ENCODE measurements at regions of chr7 and their contacts with region 1.

Region 1: DNA sequence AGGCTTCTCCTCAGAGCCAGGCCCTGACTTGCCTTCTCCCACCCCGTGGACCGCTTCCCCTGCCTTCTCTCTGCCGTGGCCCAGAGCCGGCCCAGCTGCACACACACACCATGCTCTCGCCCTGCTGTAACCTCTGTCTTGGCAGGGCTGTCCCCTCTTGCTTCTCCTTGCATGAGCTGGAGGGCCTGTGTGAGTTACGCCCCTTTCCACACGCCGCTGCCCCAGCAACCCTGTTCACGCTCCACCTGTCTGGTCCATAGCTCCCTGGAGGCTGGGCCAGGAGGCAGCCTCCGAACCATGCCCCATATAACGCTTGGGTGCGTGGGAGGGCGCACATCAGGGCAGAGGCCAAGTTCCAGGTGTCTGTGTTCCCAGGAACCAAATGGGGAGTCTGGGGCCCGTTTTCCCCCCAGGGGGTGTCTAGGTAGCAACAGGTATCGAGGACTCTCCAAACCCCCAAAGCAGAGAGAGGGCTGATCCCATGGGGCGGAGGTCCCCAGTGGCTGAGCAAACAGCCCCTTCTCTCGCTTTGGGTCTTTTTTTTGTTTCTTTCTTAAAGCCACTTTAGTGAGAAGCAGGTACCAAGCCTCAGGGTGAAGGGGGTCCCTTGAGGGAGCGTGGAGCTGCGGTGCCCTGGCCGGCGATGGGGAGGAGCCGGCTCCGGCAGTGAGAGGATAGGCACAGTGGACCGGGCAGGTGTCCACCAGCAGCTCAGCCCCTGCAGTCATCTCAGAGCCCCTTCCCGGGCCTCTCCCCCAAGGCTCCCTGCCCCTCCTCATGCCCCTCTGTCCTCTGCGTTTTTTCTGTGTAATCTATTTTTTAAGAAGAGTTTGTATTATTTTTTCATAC is 38.0 kb downstream of the LIMK1 start:
- DNase-seq: no peak
- ATAC-seq: no peak
- H3K4me3 ChIP-seq: no peak overlapping the region
- H3K27ac ChIP-seq: no peak overlapping the region
- H3K4me1 ChIP-seq: no peaks in the 10 kb centered on the region
- H3K27me3 ChIP-seq: no peaks in the 10 kb centered on the region
- CTCF ChIP-seq: no peak
- EP300 ChIP-seq: no peak
- POLR2A ChIP-seq: no peak
- RAD21 ChIP-seq: no peak

Region 2: DNA sequence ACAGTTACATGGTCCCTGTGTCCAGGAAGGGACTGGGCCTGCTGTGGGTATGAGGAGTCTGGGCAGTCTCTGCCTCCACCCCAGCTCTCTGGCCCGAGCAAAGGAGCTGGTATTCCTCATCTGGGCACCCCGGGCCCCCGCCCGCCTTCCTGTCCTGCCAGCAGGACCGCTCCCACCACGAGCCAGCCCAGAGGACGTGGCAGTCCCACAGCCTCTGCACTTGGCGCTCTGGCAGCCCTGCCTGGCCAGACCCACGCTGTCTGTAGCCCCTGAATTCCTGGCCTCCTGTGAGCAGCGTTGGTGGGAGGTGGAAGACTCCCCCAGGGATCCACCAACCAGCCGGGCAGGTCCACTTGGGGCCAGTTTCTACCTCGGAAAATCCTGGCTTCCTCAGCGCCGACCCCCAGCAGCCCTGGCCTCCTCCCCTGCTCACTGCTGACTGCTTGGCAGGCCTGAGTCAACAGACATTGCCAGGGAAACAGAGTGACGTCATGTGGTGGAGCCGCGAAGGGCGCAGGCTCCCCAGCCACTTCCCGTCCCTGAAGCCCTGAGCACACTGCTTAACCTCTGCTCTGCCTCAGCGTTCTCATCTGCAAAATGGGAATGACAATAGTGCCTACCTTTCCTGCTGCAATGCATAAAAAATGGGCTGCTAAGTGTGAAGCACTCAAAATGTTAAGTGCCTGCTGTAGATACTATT is 59.6 kb before region 1 on chr7:
- CTCF ChIA-PET with region 1: no interaction called
- POLR2A ChIA-PET with region 1: no interaction called
- RAD21 ChIA-PET with region 1: no interaction called
- SMC1A ChIA-PET with region 1: no interaction called
- in situ Hi-C with region 1: no loop called
- intact Hi-C with region 1: loop called (anchors 10 kb)
- DNase-seq: no peak
- ATAC-seq: peak; percentile 96
- H3K4me3 ChIP-seq: no peak overlapping the region
- H3K27ac ChIP-seq: no peak overlapping the region
- H3K4me1 ChIP-seq: no peaks in the 10 kb centered on the region
- H3K27me3 ChIP-seq: peaks cover 0 to 1% of the 10 kb centered on the region in 2 experiments; a peak in 1 of 4 replicates
- CTCF ChIP-seq: no peak
- EP300 ChIP-seq: no peak
- POLR2A ChIP-seq: no peak
- RAD21 ChIP-seq: no peak